ENCODE measurements at regions of chr4 and their contacts with region 1.

Region 1: GRCh38 chr4:154024097-154024694 is 235.3 kb upstream of the SFRP2 start:
- DNase-seq: no peak
- ATAC-seq: peak in 1 of 2 donors; percentile 38
- H3K4me3 ChIP-seq: no peak overlapping the region
- H3K27ac ChIP-seq: no peak overlapping the region
- H3K4me1 ChIP-seq: no peaks in the 10 kb centered on the region
- H3K27me3 ChIP-seq: no peaks in the 10 kb centered on the region

Region 2: GRCh38 chr4:153785910-153786721 is 238.1 kb before region 1 on chr4:
- intact Hi-C with region 1: loop called in 3 of 4 experiments (anchors 5 to 10 kb)
- DNase-seq: no peak
- ATAC-seq: no peak
- H3K4me3 ChIP-seq: no peak overlapping the region
- H3K27ac ChIP-seq: no peak overlapping the region
- H3K4me1 ChIP-seq: no peaks in the 10 kb centered on the region
- H3K27me3 ChIP-seq: no peaks in the 10 kb centered on the region

Region 3: DNA sequence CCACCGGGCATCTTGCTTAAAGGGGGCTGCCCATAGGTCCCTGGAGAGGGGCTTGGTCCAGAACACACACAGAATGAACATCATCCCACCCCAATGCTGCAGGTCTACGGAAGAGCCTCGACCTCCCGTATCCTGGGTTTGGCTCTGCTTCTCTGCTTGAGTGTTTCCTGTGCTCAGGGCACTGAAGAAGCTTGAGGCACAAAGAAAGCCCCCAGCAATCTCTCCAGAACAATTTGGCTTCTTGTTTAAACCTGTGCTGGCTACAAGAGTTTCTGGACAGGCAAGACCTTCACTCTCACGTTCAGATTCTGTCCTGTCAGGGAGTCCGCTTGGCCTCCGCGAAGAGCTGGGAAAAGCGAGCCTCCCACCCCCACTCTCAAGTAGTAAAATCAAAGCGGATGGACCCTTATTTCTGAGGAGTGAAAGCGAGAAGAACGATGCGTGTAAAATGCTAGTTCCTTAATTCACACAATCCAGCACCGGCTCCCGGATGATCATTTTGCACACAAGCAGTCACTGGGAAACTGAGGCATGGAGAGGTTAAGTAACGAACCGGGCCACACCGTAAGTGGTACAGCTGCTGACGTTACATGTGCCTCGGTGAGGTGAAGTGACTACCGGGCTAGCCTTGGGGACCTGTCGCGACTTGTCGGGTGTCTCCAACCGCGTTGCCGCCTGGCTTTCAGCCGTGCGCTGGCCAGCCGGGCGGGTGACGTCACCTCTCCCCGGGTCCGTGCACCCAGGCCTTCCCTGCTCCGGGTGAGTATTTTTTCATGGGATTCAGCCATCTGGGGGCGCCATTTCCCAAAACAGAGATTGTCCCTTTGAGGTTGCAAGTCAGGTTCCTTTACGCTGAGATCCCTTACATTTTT is 232.2 kb before region 1 on chr4:
- intact Hi-C with region 1: loop called in 3 of 4 experiments (anchors 5 to 10 kb)
- DNase-seq: peak; percentile 68 to 82 (median 81)
- ATAC-seq: peak; percentile 58 to 71
- H3K4me3 ChIP-seq: peak overlapping the region; percentile 8
- H3K27ac ChIP-seq: no peak overlapping the region
- H3K4me1 ChIP-seq: no peaks in the 10 kb centered on the region
- H3K27me3 ChIP-seq: no peaks in the 10 kb centered on the region

Measured in right cardiac atrium (tissue), 5 donors.